Right lobe of liver (tissue), 6 donors: ENCODE measurements at regions of chrX and their contacts with region 1.

Region 1: DNA sequence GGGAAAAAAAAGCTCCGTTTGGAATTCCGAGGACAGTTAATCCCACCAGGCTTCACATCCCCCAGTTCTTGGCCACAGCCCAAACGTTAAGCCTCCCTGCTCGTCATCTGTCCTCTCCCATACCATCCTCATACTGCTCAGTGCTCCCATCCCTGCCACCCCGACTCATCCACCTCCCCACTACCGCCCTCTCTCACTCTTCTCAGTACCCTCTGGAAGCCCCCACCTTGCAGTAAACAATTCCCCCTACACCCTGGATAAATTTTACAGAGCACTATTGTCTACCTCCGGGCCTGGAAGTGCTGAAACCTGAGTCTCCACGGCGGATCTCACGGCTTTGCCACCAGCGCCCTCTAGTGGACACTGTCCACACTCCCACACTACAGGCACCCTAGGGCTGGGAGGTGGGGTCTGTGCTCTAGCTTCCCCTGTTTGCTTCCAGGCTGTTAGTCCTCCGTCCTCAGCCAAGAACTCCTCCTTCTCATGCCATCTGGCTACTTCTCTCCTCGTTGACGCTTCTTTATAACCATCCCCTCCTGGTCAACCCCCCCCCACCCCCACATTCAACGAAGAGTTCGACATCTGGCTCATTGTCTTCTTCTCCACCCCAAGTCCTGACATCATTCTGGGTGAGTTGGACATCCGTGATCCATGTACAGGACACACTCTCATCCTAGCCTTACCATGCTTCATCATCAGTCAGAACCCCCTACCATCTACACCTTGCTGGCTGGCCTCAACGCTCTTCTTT is 54.5 kb downstream of the RTL9 start:
- DNase-seq: peak; percentile 62 to 68 (median 65)
- ATAC-seq: peak; percentile 88 to 95 (median 94)
- H3K4me3 ChIP-seq: no peak overlapping the region
- H3K27ac ChIP-seq: no peak overlapping the region
- H3K4me1 ChIP-seq: no peaks in the 10 kb centered on the region
- H3K27me3 ChIP-seq: peaks cover 0 to 5% of the 10 kb centered on the region in 2 donors
- CTCF ChIP-seq: peak; percentile 72 to 90 (median 86)
- POLR2A ChIP-seq: no peak

Region 2: GRCh38 chrX:110156167-110156754 is 256.9 kb before region 1 on chrX:
- intact Hi-C with region 1: loop called in 1 of 2 experiments (anchors 5 kb)
- DNase-seq: no peak
- ATAC-seq: peak in 1 of 4 donors; percentile 13
- H3K4me3 ChIP-seq: no peak overlapping the region
- H3K27ac ChIP-seq: no peak overlapping the region
- H3K4me1 ChIP-seq: no peaks in the 10 kb centered on the region
- H3K27me3 ChIP-seq: no peaks in the 10 kb centered on the region
- CTCF ChIP-seq: peak; percentile 49 to 71 (median 68)
- POLR2A ChIP-seq: no peak

Region 3: GRCh38 chrX:110219920-110220319 is 193.2 kb before region 1 on chrX:
- intact Hi-C with region 1: no loop called
- DNase-seq: no peak
- ATAC-seq: no peak
- H3K4me3 ChIP-seq: no peak overlapping the region
- H3K27ac ChIP-seq: no peak overlapping the region
- H3K4me1 ChIP-seq: no peaks in the 10 kb centered on the region
- H3K27me3 ChIP-seq: no peaks in the 10 kb centered on the region
- CTCF ChIP-seq: no peak
- POLR2A ChIP-seq: no peak

Region 4: GRCh38 chrX:110578270-110578669 is 165.1 kb after region 1 on chrX:
- intact Hi-C with region 1: no loop called
- DNase-seq: no peak
- ATAC-seq: no peak
- H3K4me3 ChIP-seq: no peak overlapping the region
- H3K27ac ChIP-seq: no peak overlapping the region
- H3K4me1 ChIP-seq: no peaks in the 10 kb centered on the region
- H3K27me3 ChIP-seq: no peaks in the 10 kb centered on the region
- CTCF ChIP-seq: no peak
- POLR2A ChIP-seq: no peak